Activated CD8-positive, alpha-beta T cell treated with anti-CD3 and anti-CD28 coated beads for 36 hours (primary cell): ENCODE measurements at regions of chr19 and their contacts with region 1.

Region 1: DNA sequence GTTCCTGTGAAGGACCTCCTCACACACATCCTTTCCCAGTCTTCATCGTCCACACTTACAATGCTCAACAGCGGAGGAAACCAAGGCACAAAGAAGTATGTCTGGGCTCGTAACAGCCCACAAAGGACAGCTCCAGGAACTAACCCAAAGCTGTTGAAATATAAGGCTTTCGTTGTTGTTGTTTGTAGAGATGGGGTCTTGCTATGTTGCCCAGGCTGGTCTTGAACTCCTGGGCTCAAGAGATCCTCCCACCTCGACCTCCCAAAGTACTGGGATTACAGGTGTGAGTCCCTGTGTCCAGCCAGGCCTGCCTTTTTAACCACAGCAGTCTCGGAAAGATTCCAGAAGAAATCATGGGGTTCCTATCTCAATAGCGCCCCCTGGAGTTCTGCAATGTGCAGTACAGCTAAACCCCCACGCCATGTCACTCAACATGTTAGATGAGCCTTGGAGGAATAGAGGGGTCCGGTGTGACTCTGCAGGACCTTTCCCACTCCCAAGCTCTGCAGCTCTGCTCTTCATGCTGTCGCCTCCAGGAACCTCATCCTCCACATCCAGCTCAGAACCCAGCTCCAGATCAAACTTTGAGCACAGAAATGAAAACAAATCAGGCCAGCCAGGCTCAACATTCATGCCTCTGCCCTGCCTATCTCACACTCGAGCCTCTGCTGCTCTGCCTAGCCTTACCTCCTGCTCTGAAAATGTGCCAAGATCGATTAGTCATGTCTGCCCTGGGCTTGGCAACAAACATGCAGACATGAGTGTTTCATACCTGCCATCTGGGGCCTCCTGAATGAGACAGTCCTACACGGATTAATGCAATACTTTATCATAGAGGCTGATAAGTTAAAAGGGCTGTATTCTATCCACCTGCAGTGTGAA is 7.5 kb downstream of the PLA2G4C start:
- DNase-seq: peak; percentile 45
- ATAC-seq: peak; percentile 61
- H3K4me3 Mint-ChIP-seq: no peak overlapping the region
- H3K27ac Mint-ChIP-seq: no peak overlapping the region
- H3K4me1 Mint-ChIP-seq: no peaks in the 10 kb centered on the region
- H3K27me3 Mint-ChIP-seq: no peaks in the 10 kb centered on the region
- CTCF ChIP-seq: peak; percentile 77

Region 2: DNA sequence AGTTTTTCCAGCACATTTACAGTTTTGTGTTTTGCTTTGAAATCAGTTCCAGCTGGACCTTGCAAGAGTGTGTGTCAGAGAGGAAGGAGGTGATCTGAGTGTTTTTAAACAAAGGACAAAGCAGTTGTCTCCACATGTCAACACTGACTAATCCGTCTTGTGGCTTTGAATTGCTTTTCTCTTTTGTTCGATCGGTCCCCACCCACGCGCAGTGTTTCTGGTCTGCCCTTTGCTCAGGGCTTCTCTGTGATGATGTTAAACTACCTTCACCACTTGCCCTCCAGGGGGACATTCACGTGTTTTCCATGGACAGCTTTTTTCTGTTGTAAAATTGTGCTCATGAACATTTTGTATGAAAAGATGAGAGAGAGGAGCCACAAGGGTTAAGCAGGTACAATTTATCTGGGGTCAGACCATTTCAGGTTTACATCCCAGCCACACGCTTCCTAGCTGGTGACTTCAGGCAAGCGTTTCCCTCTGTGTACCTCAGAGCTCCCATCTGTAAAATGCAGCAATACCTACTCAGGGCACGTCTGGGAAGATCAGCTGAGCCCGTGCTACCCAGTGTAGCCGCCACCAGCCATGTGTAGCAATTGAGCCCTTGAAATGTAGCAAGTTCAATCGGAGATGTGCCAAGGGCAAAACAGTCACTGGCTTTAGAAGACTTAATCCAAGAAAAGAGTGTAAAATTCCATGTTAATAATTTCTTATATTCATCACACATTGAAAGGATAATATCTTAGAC is 21.0 kb after region 1 on chr19:
- CTCF ChIA-PET with region 1: interaction called, 15 read pairs
- POLR2A ChIA-PET with region 1: interaction called, 7 read pairs
- intact Hi-C with region 1: no loop called
- DNase-seq: peak; percentile 90
- ATAC-seq: peak; percentile 87
- H3K4me3 Mint-ChIP-seq: no peak overlapping the region
- H3K27ac Mint-ChIP-seq: peak overlapping the region; percentile 69
- H3K4me1 Mint-ChIP-seq: peaks cover 18% of the 10 kb centered on the region
- H3K27me3 Mint-ChIP-seq: no peaks in the 10 kb centered on the region
- CTCF ChIP-seq: peak; percentile 22

Region 3: DNA sequence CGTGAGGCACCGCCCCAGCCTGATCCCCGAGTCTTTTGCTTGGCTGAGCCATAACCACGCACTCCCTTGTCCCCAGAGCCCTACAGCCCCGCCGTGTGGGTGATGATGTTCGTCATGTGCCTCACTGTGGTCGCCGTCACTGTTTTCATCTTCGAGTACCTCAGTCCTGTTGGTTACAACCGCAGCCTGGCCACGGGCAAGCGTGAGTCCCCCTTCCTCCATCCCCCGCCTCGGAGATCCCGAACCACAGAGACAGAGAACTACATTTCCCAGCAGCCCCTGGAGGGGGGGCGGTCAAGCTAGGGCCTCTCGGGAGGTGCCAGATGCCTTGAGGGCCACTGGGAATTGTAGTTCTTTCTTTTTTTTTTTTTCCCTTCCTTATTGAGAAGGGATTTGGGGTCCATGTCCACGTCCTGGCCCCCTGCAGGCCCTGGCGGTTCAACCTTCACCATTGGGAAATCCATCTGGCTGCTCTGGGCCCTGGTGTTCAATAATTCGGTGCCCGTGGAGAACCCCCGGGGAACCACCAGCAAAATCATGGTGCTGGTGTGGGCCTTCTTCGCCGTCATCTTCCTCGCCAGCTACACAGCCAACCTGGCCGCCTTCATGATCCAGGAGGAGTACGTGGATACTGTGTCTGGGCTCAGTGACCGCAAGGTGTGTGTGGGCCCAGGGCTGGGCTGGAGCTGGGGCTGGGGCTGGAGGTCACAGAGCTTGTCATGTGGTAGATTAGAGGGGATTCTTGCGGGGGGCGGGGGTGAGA is 316.2 kb after region 1 on chr19:
- CTCF ChIA-PET with region 1: no interaction called
- POLR2A ChIA-PET with region 1: no interaction called
- intact Hi-C with region 1: no loop called
- DNase-seq: peak; percentile 90
- ATAC-seq: peak; percentile 80
- H3K4me3 Mint-ChIP-seq: peak overlapping the region; percentile 65
- H3K27ac Mint-ChIP-seq: peak overlapping the region; percentile 87
- H3K4me1 Mint-ChIP-seq: peaks cover 24% of the 10 kb centered on the region
- H3K27me3 Mint-ChIP-seq: peaks cover 15% of the 10 kb centered on the region
- CTCF ChIP-seq: no peak